GM13977 (cell line): ENCODE measurements at regions of chr12 and their contacts with region 1.

Region 1: DNA sequence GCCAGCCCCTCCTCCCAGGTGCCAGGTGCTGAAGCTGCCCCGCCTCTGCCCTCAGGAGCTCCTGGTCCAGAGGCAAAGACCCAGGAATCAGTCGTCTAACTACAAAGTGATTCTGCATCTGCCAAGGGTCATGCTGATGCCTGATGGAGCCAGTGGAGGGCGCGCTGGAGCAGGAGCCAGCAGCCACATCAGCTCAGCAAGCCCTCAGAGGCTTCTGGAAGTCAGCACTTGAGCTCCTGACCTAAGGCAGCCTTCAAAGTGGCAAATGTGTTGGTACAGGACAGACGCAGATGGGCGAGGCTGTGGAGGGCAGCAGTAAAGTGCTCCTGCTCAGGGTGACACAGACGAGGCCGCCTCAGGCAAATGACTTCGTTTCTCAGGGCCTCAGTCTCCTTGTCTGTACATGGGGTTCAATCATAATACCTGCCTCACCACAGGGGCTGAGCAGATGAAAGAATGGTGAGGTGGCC is 10.9 kb downstream of the C12orf43 start:
- DNase-seq: peak; percentile 59
- CTCF ChIP-seq: peak; percentile 76

Region 2: DNA sequence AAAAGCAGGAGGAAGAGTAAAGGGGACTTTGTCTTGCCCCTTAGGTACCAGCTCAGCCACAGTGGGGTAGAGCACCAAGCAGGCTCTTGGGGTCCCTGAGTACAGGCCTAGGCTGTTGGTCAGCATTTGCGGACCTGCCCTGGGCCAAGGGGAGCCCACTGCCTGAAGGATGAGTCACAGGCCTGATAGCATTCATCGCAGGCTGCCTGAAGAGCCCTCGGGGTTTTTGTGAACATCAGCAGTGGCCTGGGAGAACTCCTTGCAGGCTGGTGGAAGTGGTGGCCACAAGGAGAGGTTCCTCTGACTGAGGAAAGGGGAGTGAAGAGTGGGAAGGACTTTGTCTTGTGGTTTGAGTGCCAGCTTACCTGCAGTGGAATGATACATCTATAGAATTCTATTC is 102.3 kb after region 1 on chr12:
- in situ Hi-C with region 1: loop called (anchors 10 kb)
- DNase-seq: no peak
- CTCF ChIP-seq: no peak